ENCODE measurements at regions of chr16 and their contacts with region 1.

Region 1: GRCh38 chr16:67159593-67160406 is at the starts of genes FBXL8 and TRADD:
- DNase-seq: peak; percentile 73 to 91 (median 82)
- ATAC-seq: peak; percentile 78
- H3K4me3 ChIP-seq: peak within 1 kb of the TSS; percentile 78
- H3K4me3 Mint-ChIP-seq: peak within 1 kb of the TSS; percentile 76 to 93 (median 87)
- H3K27ac ChIP-seq: peak within 1 kb of the TSS; percentile 94
- H3K27ac Mint-ChIP-seq: peak within 1 kb of the TSS; percentile 94 to 99 (median 95)
- H3K4me1 ChIP-seq: peaks cover 49 to 59% of the 10 kb centered on the region in 2 donors
- H3K4me1 Mint-ChIP-seq: peaks cover 25 to 66% (median 51%) of the 10 kb centered on the region in 7 donors
- H3K27me3 ChIP-seq: peaks cover 1 to 19% of the 10 kb centered on the region in 2 donors
- H3K27me3 Mint-ChIP-seq: peaks cover 5 to 12% (median 10%) of the 10 kb centered on the region in 5 donors
- total RNA-seq, gene FBXL8: 8.7 to 84.7 (median 9.7) TPM
- total RNA-seq, gene TRADD: 47.0 to 92.8 (median 52.8) TPM

Region 2: DNA sequence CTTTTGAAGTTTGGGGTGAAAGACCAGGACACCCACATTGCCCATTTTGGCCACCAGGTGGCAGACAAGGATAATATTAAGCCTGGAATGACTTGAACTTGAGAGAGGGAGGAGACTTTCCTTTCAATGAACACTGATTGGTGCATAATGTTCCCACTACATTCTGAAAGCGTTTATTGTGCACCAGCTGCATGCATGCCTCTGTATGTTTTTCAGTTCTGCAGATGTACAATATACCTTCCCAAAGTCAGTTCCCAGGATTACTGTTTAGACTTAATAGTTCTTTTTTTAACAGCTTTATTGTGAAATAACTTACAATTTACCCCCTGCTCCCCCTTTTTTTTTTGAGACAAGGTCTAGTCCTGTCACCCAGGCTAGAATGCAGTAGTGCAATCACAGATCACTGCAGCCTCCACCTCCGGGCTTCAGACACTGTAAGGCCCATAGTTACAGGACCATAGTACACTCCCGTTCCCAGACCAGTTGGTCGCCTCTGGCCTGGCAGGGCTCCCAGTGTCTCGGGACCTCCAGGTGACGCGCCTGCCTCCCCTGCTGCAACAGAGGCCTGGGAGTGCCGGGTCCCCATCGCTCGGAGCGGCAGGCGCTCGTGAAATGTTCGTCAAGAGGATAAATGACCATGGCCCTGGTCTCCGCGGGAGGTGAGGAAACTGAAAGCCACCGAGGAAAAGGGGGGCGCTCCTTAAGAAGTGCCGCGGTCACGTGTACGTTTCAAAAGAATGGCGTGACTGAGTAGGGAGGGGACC is 212.3 kb before region 1 on chr16:
- CTCF ChIA-PET with region 1: no interaction called
- POLR2A ChIA-PET with region 1: no interaction called
- intact Hi-C with region 1: loop called in 1 of 2 experiments (anchors 1 kb)
- DNase-seq: peak; percentile 64 to 86 (median 80)
- ATAC-seq: peak; percentile 97
- H3K4me3 ChIP-seq: peak overlapping the region; percentile 45
- H3K4me3 Mint-ChIP-seq: peak overlapping the region; percentile 83 to 95 (median 92)
- H3K27ac ChIP-seq: peak overlapping the region; percentile 26
- H3K27ac Mint-ChIP-seq: peak overlapping the region in 3 of 9 donors; percentile 13 to 50 (median 29)
- H3K4me1 ChIP-seq: peaks cover 0 to 4% of the 10 kb centered on the region in 2 donors
- H3K4me1 Mint-ChIP-seq: peaks cover 13 to 24% (median 18%) of the 10 kb centered on the region in 7 donors
- H3K27me3 ChIP-seq: no peaks in the 10 kb centered on the region
- H3K27me3 Mint-ChIP-seq: peaks cover 23 to 39% (median 32%) of the 10 kb centered on the region in 5 donors

Region 3: GRCh38 chr16:66977341-66978113 is 182.3 kb before region 1 on chr16:
- CTCF ChIA-PET with region 1: interaction called, 11 read pairs
- POLR2A ChIA-PET with region 1: interaction called, 3 read pairs
- intact Hi-C with region 1: loop called (anchors 1 kb)
- DNase-seq: peak; percentile 69 to 92 (median 82)
- ATAC-seq: peak; percentile 99
- H3K4me3 ChIP-seq: no peak overlapping the region
- H3K4me3 Mint-ChIP-seq: peak overlapping the region in 1 of 10 donors; percentile 12
- H3K27ac ChIP-seq: no peak overlapping the region
- H3K27ac Mint-ChIP-seq: peak overlapping the region in 2 of 9 donors; percentile 42 to 86
- H3K4me1 ChIP-seq: no peaks in the 10 kb centered on the region
- H3K4me1 Mint-ChIP-seq: peaks cover 4 to 69% (median 11%) of the 10 kb centered on the region in 7 donors
- H3K27me3 ChIP-seq: no peaks in the 10 kb centered on the region
- H3K27me3 Mint-ChIP-seq: peaks cover 0 to 3% (median 0%) of the 10 kb centered on the region in 5 donors

Region 4: DNA sequence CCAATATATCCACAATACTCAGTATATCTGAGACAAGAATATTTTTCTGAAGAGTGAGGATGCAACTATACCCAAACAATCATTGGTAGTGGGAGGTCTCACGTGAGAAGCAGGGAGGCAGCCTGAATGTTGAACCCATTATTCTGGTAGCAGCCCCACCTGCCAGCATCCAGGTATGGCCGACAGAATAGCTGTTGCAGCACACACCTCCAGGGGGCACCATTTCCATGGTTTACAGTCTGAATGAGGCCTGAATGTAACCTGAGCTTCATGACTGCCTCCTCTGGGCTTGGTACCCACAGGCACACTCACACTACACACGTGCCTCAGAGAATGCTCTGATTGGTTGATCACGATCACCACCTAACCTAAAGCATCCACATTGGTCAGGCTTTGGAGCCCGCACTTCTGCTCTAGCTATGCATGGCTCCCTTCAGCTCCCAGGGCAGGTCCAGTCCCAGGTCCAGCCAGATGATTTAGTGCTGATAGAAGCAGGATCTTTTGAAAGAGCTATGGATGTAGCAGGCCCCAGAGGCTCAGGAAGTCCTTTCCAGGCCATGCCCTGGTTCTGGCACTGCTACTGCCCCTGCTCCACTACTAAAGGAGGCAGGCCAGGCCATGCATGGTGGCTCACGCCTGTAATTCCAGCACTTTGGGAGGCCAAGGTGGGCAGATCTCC is 141.9 kb before region 1 on chr16:
- CTCF ChIA-PET with region 1: interaction called, 24 read pairs
- POLR2A ChIA-PET with region 1: interaction called, 7 read pairs
- intact Hi-C with region 1: loop called (anchors 1 kb)
- DNase-seq: peak; percentile 58 to 87 (median 84)
- ATAC-seq: peak; percentile 96
- H3K4me3 ChIP-seq: no peak overlapping the region
- H3K4me3 Mint-ChIP-seq: peak overlapping the region in 2 of 10 donors; percentile 16 to 21
- H3K27ac ChIP-seq: no peak overlapping the region
- H3K27ac Mint-ChIP-seq: peak overlapping the region in 2 of 9 donors; percentile 43 to 75
- H3K4me1 ChIP-seq: peaks cover 4 to 11% of the 10 kb centered on the region in 2 donors
- H3K4me1 Mint-ChIP-seq: peaks cover 0 to 55% (median 8%) of the 10 kb centered on the region in 7 donors
- H3K27me3 ChIP-seq: no peaks in the 10 kb centered on the region
- H3K27me3 Mint-ChIP-seq: no peaks in the 10 kb centered on the region

Region 5: GRCh38 chr16:67141426-67141825 is 18.4 kb before region 1 on chr16:
- CTCF ChIA-PET with region 1: interaction called, 14 read pairs
- POLR2A ChIA-PET with region 1: interaction called, 4 read pairs
- intact Hi-C with region 1: no loop called
- DNase-seq: no peak
- ATAC-seq: no peak
- H3K4me3 ChIP-seq: no peak overlapping the region
- H3K4me3 Mint-ChIP-seq: no peak overlapping the region
- H3K27ac ChIP-seq: no peak overlapping the region
- H3K27ac Mint-ChIP-seq: no peak overlapping the region
- H3K4me1 ChIP-seq: no peaks in the 10 kb centered on the region
- H3K4me1 Mint-ChIP-seq: peaks cover 0 to 2% (median 0%) of the 10 kb centered on the region in 7 donors
- H3K27me3 ChIP-seq: no peaks in the 10 kb centered on the region
- H3K27me3 Mint-ChIP-seq: no peaks in the 10 kb centered on the region

Region 6: GRCh38 chr16:67183627-67184328 is 24.0 kb after region 1 on chr16 and contains the start of gene MATCAP1:
- CTCF ChIA-PET with region 1: interaction called, 9 read pairs
- POLR2A ChIA-PET with region 1: interaction called, 22 read pairs
- intact Hi-C with region 1: loop called (anchors 1 kb)
- DNase-seq: peak; percentile 90 to 98 (median 96)
- ATAC-seq: peak; percentile 97
- H3K4me3 ChIP-seq: peak within 1 kb of the TSS; percentile 79
- H3K4me3 Mint-ChIP-seq: peak within 1 kb of the TSS in 5 of 10 donors; percentile 48 to 91 (median 86)
- H3K27ac ChIP-seq: peak within 1 kb of the TSS; percentile 97
- H3K27ac Mint-ChIP-seq: peak within 1 kb of the TSS in 2 of 9 donors; percentile 58 to 67
- H3K4me1 ChIP-seq: peaks cover 12 to 15% of the 10 kb centered on the region in 2 donors
- H3K4me1 Mint-ChIP-seq: peaks cover 8 to 24% (median 13%) of the 10 kb centered on the region in 7 donors
- H3K27me3 ChIP-seq: no peaks in the 10 kb centered on the region
- H3K27me3 Mint-ChIP-seq: peaks cover 4 to 15% (median 4%) of the 10 kb centered on the region in 5 donors
- total RNA-seq, gene MATCAP1: 4.3 to 88.1 (median 11.0) TPM

Region 7: GRCh38 chr16:67216612-67217490 is 57.1 kb after region 1 on chr16:
- CTCF ChIA-PET with region 1: no interaction called
- POLR2A ChIA-PET with region 1: no interaction called
- intact Hi-C with region 1: no loop called
- DNase-seq: no peak
- ATAC-seq: peak; percentile 61
- H3K4me3 ChIP-seq: no peak overlapping the region
- H3K4me3 Mint-ChIP-seq: no peak overlapping the region
- H3K27ac ChIP-seq: no peak overlapping the region
- H3K27ac Mint-ChIP-seq: peak overlapping the region in 1 of 9 donors; percentile 59
- H3K4me1 ChIP-seq: no peaks in the 10 kb centered on the region
- H3K4me1 Mint-ChIP-seq: peaks cover 0 to 18% (median 12%) of the 10 kb centered on the region in 7 donors
- H3K27me3 ChIP-seq: no peaks in the 10 kb centered on the region
- H3K27me3 Mint-ChIP-seq: no peaks in the 10 kb centered on the region